ENCODE measurements at regions of chr2 and their contacts with region 1.

Region 1: DNA sequence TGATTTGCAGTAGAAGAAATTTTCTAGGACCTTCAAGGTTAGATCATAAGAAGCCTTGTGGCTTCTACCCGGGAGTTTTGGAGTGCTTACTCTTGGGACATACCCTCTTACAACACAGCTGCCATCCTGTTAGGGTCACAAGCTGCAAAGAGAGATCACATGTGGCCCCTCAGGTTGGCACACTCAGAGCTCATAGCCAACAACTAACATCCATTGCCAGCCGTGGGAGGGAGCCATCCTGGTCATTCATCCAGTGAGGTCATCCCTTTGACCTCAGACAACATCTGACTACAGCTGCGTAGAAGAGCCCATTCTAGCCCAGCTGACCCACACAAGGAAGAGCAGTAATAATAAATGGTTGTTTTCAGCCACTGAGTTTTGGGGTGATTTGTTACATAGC is 76.9 kb upstream of the NABP1 start:
- H3K4me3 Mint-ChIP-seq: no peak overlapping the region
- H3K27ac Mint-ChIP-seq: peak overlapping the region; percentile 8
- H3K4me1 Mint-ChIP-seq: peaks cover 7% of the 10 kb centered on the region
- H3K27me3 Mint-ChIP-seq: no peaks in the 10 kb centered on the region

Region 2: GRCh38 chr2:191637182-191638078 is 36.4 kb after region 1 on chr2:
- intact Hi-C with region 1: loop called (anchors 5 kb)
- H3K4me3 Mint-ChIP-seq: peak overlapping the region; percentile 34
- H3K27ac Mint-ChIP-seq: peak overlapping the region; percentile 85
- H3K4me1 Mint-ChIP-seq: peaks cover 22% of the 10 kb centered on the region
- H3K27me3 Mint-ChIP-seq: no peaks in the 10 kb centered on the region

Measured in dendritic cell treated with granulocyte-macrophage colony-stimulating factor and Interleukin-4, amounts not matched to agents 40 ng/mL and 50 ng/mL, for 4 days (primary cell).